IMR-90 (cell line): ENCODE measurements at regions of chr11 and their contacts with region 1.

Region 1: GRCh38 chr11:111283945-111284481 is 14.3 kb upstream of the POU2AF3 start:
- DNase-seq: peak; percentile 51
- ATAC-seq: no peak
- H3K4me3 ChIP-seq: no peak overlapping the region
- H3K27ac ChIP-seq: no peak overlapping the region
- H3K4me1 ChIP-seq: no peaks in the 10 kb centered on the region
- H3K27me3 ChIP-seq: peaks cover 26% of the 10 kb centered on the region
- CTCF ChIP-seq: no peak
- POLR2A ChIP-seq: no peak
- RAD21 ChIP-seq: no peak

Region 2: GRCh38 chr11:110654456-110654855 is 629.6 kb before region 1 on chr11:
- CTCF ChIA-PET with region 1: no interaction called
- POLR2A ChIA-PET with region 1: no interaction called
- dilution Hi-C with region 1: no loop called
- in situ Hi-C with region 1: no loop called
- intact Hi-C with region 1: no loop called
- DNase-seq: no peak
- ATAC-seq: no peak
- H3K4me3 ChIP-seq: no peak overlapping the region
- H3K27ac ChIP-seq: no peak overlapping the region
- H3K4me1 ChIP-seq: no peaks in the 10 kb centered on the region
- H3K27me3 ChIP-seq: no peaks in the 10 kb centered on the region
- CTCF ChIP-seq: no peak
- POLR2A ChIP-seq: no peak
- RAD21 ChIP-seq: no peak

Region 3: GRCh38 chr11:111422494-111423249 is 138.7 kb after region 1 on chr11:
- CTCF ChIA-PET with region 1: interaction called, 21 read pairs
- POLR2A ChIA-PET with region 1: no interaction called
- dilution Hi-C with region 1: no loop called
- in situ Hi-C with region 1: no loop called
- intact Hi-C with region 1: loop called (anchors 1 kb)
- DNase-seq: peak; percentile 26
- ATAC-seq: peak; percentile 95
- H3K4me3 ChIP-seq: no peak overlapping the region
- H3K27ac ChIP-seq: no peak overlapping the region
- H3K4me1 ChIP-seq: peaks cover 2% of the 10 kb centered on the region; the same call in 1 of the 2 replicates
- H3K27me3 ChIP-seq: peaks cover 16% of the 10 kb centered on the region
- CTCF ChIP-seq: peak; percentile 82
- POLR2A ChIP-seq: no peak
- RAD21 ChIP-seq: peak; percentile 82

Region 4: DNA sequence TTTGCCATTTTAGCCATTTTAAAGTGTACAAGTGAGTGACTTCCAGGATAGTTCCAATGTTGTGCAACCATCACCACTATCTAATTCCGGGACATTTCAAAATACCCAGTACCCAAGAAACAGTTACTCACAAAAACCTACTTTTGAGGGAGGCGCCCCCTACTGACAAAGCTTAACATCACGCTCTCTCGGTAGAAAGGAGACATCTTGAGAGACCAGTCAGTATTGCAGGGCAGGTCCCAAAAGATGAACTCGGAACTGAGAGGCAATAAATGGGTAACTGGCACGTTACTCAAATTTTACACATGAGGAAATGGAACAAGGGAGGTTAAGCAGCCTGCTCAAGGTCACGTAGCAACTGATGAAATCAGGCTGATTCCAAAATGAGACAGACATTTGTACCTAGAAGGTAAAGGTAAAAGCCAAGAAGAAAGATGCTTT is 145.1 kb after region 1 on chr11:
- CTCF ChIA-PET with region 1: interaction called, 21 read pairs
- POLR2A ChIA-PET with region 1: no interaction called
- dilution Hi-C with region 1: no loop called
- in situ Hi-C with region 1: no loop called
- intact Hi-C with region 1: no loop called
- DNase-seq: peak; percentile 37
- ATAC-seq: 0 out of 2 replicates have a peak, but pooled peaks have one; percentile 29
- H3K4me3 ChIP-seq: no peak overlapping the region
- H3K27ac ChIP-seq: no peak overlapping the region
- H3K4me1 ChIP-seq: no peaks in the 10 kb centered on the region
- H3K27me3 ChIP-seq: peaks cover 15% of the 10 kb centered on the region
- CTCF ChIP-seq: peak; percentile 68
- POLR2A ChIP-seq: no peak
- RAD21 ChIP-seq: peak; percentile 44

Region 5: GRCh38 chr11:111446404-111447111 is 162.5 kb after region 1 on chr11:
- CTCF ChIA-PET with region 1: interaction called, 5 read pairs
- POLR2A ChIA-PET with region 1: no interaction called
- dilution Hi-C with region 1: no loop called
- in situ Hi-C with region 1: loop called (anchors 5 kb)
- intact Hi-C with region 1: loop called (anchors 1 kb)
- DNase-seq: peak; percentile 94
- ATAC-seq: peak; percentile 98
- H3K4me3 ChIP-seq: no peak overlapping the region
- H3K27ac ChIP-seq: no peak overlapping the region
- H3K4me1 ChIP-seq: no peaks in the 10 kb centered on the region; the same call in 1 of the 2 replicates
- H3K27me3 ChIP-seq: no peaks in the 10 kb centered on the region; the same call in 1 of the 2 replicates
- CTCF ChIP-seq: peak; percentile 95
- POLR2A ChIP-seq: 0 out of 2 replicates have a peak, but pooled peaks have one; percentile 48
- RAD21 ChIP-seq: peak; percentile 99